Activated CD4-positive, alpha-beta T cell treated with anti-CD3 and anti-CD28 coated beads for 36 hours (primary cell): ENCODE measurements at regions of chr2 and their contacts with region 1.

Region 1: DNA sequence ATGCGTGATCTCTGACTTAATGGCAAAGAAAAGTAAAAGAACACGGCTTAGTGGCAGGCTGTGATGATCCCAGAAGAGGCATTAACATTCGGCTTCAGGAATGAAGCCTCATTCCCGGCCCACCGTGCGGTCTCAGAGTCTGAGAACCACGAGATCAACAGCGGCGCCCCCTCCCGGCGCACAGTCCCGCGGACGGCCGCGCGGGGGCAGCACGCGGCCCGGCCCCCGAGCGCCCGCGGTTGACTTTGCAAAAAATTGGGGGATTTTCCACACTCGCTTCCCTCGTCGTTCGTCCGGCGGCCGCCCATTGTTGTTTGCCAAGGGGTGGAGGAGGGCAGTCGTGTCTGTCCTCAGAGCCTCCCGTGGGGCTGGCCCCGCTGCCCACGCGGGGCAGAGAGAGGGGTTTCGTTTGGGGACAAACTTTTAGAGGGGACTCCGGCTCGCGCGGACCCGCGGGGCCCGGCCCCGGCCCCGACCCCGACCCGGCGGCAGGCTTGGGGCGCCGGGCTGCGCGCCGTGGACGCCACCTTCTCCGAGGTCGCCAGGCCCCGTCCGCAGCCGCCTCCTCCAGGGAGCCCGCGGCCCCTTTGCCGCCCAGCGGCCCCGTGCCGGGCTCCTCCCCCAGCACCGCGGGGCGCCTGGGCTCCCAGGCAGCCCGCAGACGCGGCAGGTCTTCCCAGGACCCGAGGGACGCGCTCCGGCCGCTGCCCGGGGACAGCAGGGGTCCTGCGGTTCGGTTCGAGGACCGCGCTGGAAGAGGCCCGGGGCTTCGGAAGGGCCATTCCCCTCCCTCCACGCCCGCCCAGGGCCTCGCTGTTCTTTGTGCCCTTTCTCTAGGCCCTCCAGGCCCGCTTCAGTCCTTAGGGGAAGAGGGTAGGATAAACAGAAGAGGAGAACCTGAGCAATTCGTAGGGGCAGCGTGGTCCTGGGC is 3.4 kb upstream of the HS6ST1 start:
- DNase-seq: peak; percentile 89
- ATAC-seq: peak; percentile 52
- H3K4me3 Mint-ChIP-seq: peak overlapping the region; percentile 51
- H3K27ac Mint-ChIP-seq: peak overlapping the region; percentile 60
- H3K4me1 Mint-ChIP-seq: peaks cover 6% of the 10 kb centered on the region
- H3K27me3 Mint-ChIP-seq: no peaks in the 10 kb centered on the region

Region 2: GRCh38 chr2:128062571-128062970 is 259.5 kb before region 1 on chr2:
- CTCF ChIA-PET with region 1: no interaction called
- POLR2A ChIA-PET with region 1: no interaction called
- intact Hi-C with region 1: loop called in 1 of 2 experiments (anchors 1 kb)
- DNase-seq: no peak
- ATAC-seq: no peak
- H3K4me3 Mint-ChIP-seq: no peak overlapping the region
- H3K27ac Mint-ChIP-seq: no peak overlapping the region
- H3K4me1 Mint-ChIP-seq: no peaks in the 10 kb centered on the region
- H3K27me3 Mint-ChIP-seq: no peaks in the 10 kb centered on the region

Region 3: GRCh38 chr2:128178650-128179460 is 143.2 kb before region 1 on chr2:
- CTCF ChIA-PET with region 1: interaction called, 3 read pairs
- POLR2A ChIA-PET with region 1: no interaction called
- intact Hi-C with region 1: loop called (anchors 2 to 10 kb)
- DNase-seq: peak; percentile 77
- ATAC-seq: peak; percentile 92
- H3K4me3 Mint-ChIP-seq: no peak overlapping the region
- H3K27ac Mint-ChIP-seq: no peak overlapping the region
- H3K4me1 Mint-ChIP-seq: peaks cover 2% of the 10 kb centered on the region
- H3K27me3 Mint-ChIP-seq: no peaks in the 10 kb centered on the region

Region 4: DNA sequence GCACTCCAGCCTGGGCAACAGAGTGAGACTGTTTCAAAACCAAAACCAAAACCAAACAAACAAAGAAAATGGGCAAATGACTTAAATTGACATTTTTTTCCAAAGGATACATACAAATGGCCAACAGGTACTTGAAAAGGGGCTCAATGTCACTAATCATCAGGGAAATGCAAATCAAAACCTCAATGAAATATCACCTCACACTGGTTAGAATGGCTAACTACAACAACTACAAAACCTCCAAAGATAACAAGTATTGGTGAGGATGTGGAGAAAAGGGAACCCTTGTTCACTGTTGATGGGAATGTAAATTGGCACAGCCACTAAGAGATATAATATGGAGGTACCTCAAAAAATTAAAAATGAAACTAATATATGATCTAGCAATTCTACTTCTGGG is 209.8 kb after region 1 on chr2:
- CTCF ChIA-PET with region 1: no interaction called
- POLR2A ChIA-PET with region 1: no interaction called
- intact Hi-C with region 1: loop called (anchors 5 to 10 kb)
- DNase-seq: no peak
- ATAC-seq: no peak
- H3K4me3 Mint-ChIP-seq: no peak overlapping the region
- H3K27ac Mint-ChIP-seq: no peak overlapping the region
- H3K4me1 Mint-ChIP-seq: peaks cover 7% of the 10 kb centered on the region
- H3K27me3 Mint-ChIP-seq: peaks cover 9% of the 10 kb centered on the region

Region 5: DNA sequence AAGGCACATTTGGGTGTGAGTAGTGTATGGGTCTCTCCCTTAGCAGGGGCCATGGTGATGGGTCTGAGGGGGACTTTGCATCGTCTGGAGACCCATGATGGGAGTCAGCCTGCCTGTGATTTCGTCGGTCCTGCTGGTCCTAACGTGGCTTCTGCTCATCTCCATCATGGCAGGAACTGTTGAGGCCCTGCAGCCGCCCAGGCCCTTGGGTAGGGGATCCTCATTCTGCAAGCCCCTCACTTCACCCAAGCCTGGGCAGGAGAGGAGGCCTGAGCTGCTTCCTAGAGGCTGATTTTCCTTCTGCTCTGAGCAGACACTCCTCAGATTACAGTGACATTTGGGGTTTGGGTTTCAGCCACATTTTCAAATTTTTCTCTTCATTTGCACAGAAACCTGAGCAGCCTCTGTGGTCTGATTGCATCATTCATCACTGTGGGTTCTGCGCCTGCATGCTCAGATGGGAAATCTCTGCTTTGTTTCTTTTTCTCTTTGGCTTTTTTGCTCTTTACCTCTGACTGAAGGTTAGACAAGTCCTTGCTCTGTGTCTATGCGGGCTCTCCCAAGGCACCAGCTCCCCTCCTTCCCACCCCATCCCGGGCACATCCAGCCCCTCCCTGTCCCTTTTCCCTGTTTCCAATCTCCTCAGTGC is 301.9 kb after region 1 on chr2:
- CTCF ChIA-PET with region 1: no interaction called
- POLR2A ChIA-PET with region 1: no interaction called
- intact Hi-C with region 1: loop called in 1 of 2 experiments (anchors 5 kb)
- DNase-seq: peak; percentile 72
- ATAC-seq: peak; percentile 81
- H3K4me3 Mint-ChIP-seq: peak overlapping the region; percentile 42
- H3K27ac Mint-ChIP-seq: peak overlapping the region; percentile 76
- H3K4me1 Mint-ChIP-seq: peaks cover 18% of the 10 kb centered on the region
- H3K27me3 Mint-ChIP-seq: peaks cover 2% of the 10 kb centered on the region

Region 6: GRCh38 chr2:128754246-128754724 is 432.2 kb after region 1 on chr2:
- CTCF ChIA-PET with region 1: no interaction called
- POLR2A ChIA-PET with region 1: no interaction called
- intact Hi-C with region 1: loop called (anchors 5 to 10 kb)
- DNase-seq: peak; percentile 43
- ATAC-seq: peak; percentile 71
- H3K4me3 Mint-ChIP-seq: no peak overlapping the region
- H3K27ac Mint-ChIP-seq: no peak overlapping the region
- H3K4me1 Mint-ChIP-seq: peaks cover 16% of the 10 kb centered on the region
- H3K27me3 Mint-ChIP-seq: peaks cover 2% of the 10 kb centered on the region